ENCODE measurements at regions of chr12 and their contacts with region 1.

Region 1: GRCh38 chr12:14769969-14770495 is 33.2 kb downstream of the WBP11 start:
- DNase-seq: peak; percentile 94
- H3K4me3 Mint-ChIP-seq: peak overlapping the region; percentile 98
- H3K27ac Mint-ChIP-seq: peak overlapping the region; percentile 100
- H3K4me1 Mint-ChIP-seq: peaks cover 39% of the 10 kb centered on the region
- H3K27me3 Mint-ChIP-seq: no peaks in the 10 kb centered on the region

Region 2: GRCh38 chr12:14216405-14217294 is 553.4 kb before region 1 on chr12:
- CTCF ChIA-PET with region 1: no interaction called
- POLR2A ChIA-PET with region 1: interaction called, 3 read pairs
- intact Hi-C with region 1: loop called (anchors 2 kb)
- DNase-seq: no peak
- H3K4me3 Mint-ChIP-seq: peak overlapping the region; percentile 44
- H3K27ac Mint-ChIP-seq: peak overlapping the region; percentile 42
- H3K4me1 Mint-ChIP-seq: peaks cover 35% of the 10 kb centered on the region
- H3K27me3 Mint-ChIP-seq: no peaks in the 10 kb centered on the region

Region 3: GRCh38 chr12:14365294-14366208 is 404.5 kb before region 1 on chr12 and contains the start of gene ATF7IP:
- CTCF ChIA-PET with region 1: no interaction called
- POLR2A ChIA-PET with region 1: interaction called, 12 read pairs
- intact Hi-C with region 1: loop called (anchors 1 kb)
- DNase-seq: peak; percentile 97
- H3K4me3 Mint-ChIP-seq: peak within 1 kb of the TSS; percentile 76
- H3K27ac Mint-ChIP-seq: peak within 1 kb of the TSS; percentile 91
- H3K4me1 Mint-ChIP-seq: peaks cover 41% of the 10 kb centered on the region
- H3K27me3 Mint-ChIP-seq: peaks cover 1% of the 10 kb centered on the region
- total RNA-seq, gene ATF7IP: 93.0 to 94.1 TPM

Region 4: DNA sequence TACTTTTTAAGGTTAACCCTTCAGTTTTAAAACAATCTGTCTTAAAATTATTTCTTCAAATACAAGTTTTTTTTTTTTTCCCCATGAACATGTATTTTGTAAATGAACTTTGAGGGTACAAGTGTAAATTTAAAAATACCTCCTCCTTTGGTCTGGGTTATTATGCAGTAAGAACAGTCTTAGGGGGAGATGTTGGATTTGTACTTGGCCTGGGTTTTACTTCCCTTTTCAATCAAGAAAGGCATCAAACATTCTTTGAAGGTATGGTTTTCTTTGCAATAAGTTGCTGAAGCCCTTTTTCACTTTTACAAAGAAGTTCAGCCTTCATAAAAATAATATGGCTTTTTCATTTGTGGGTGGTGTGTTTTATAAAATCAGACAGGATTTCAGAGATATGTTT is 12.7 kb after region 1 on chr12:
- CTCF ChIA-PET with region 1: interaction called, 4 read pairs
- POLR2A ChIA-PET with region 1: interaction called, 14 read pairs
- intact Hi-C with region 1: no loop called
- DNase-seq: no peak
- H3K4me3 Mint-ChIP-seq: no peak overlapping the region
- H3K27ac Mint-ChIP-seq: no peak overlapping the region
- H3K4me1 Mint-ChIP-seq: no peaks in the 10 kb centered on the region
- H3K27me3 Mint-ChIP-seq: no peaks in the 10 kb centered on the region

Region 5: GRCh38 chr12:14910090-14910915 is 140.3 kb after region 1 on chr12:
- CTCF ChIA-PET with region 1: no interaction called
- POLR2A ChIA-PET with region 1: no interaction called
- intact Hi-C with region 1: loop called (anchors 1 kb)
- DNase-seq: peak; percentile 67
- H3K4me3 Mint-ChIP-seq: peak overlapping the region; percentile 28
- H3K27ac Mint-ChIP-seq: peak overlapping the region; percentile 90
- H3K4me1 Mint-ChIP-seq: peaks cover 37% of the 10 kb centered on the region
- H3K27me3 Mint-ChIP-seq: no peaks in the 10 kb centered on the region

Region 6: GRCh38 chr12:14960548-14961465 is 190.8 kb after region 1 on chr12:
- CTCF ChIA-PET with region 1: interaction called, 14 read pairs
- POLR2A ChIA-PET with region 1: interaction called, 19 read pairs
- intact Hi-C with region 1: loop called (anchors 1 kb)
- DNase-seq: peak; percentile 49
- H3K4me3 Mint-ChIP-seq: peak overlapping the region; percentile 88
- H3K27ac Mint-ChIP-seq: peak overlapping the region; percentile 96
- H3K4me1 Mint-ChIP-seq: peaks cover 43% of the 10 kb centered on the region
- H3K27me3 Mint-ChIP-seq: no peaks in the 10 kb centered on the region

Region 7: DNA sequence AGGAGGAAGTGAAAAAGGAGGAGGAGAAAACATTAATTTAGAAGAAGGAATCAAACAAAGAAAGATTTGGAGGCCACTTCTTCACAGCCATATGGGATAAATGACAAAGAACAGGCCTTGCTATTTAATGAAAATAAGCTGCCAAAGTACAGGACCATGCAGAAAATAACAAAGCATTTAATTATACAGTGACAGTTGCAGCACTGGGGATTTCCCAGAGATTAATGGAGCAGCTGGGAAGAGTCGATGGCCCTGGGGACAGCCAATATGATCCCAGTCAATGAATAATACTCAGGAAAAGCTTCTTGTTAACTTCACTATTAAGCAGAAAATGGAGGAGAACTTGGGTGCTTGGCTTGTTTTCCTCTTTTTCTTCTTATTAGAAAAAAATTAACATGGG is 416.6 kb after region 1 on chr12:
- CTCF ChIA-PET with region 1: no interaction called
- POLR2A ChIA-PET with region 1: no interaction called
- intact Hi-C with region 1: no loop called
- DNase-seq: no peak
- H3K4me3 Mint-ChIP-seq: no peak overlapping the region
- H3K27ac Mint-ChIP-seq: no peak overlapping the region
- H3K4me1 Mint-ChIP-seq: no peaks in the 10 kb centered on the region
- H3K27me3 Mint-ChIP-seq: no peaks in the 10 kb centered on the region

Region 8: GRCh38 chr12:15882118-15882971 is 1112.3 kb after region 1 on chr12 and contains the start of gene STRAP:
- CTCF ChIA-PET with region 1: no interaction called
- POLR2A ChIA-PET with region 1: no interaction called
- intact Hi-C with region 1: loop called (anchors 2 kb)
- DNase-seq: peak; percentile 98
- H3K4me3 Mint-ChIP-seq: peak within 1 kb of the TSS; percentile 96
- H3K27ac Mint-ChIP-seq: peak within 1 kb of the TSS; percentile 94
- H3K4me1 Mint-ChIP-seq: peaks cover 48% of the 10 kb centered on the region
- H3K27me3 Mint-ChIP-seq: no peaks in the 10 kb centered on the region
- total RNA-seq, gene STRAP: 135 to 140 TPM

Measured in activated CD4-positive, alpha-beta memory T cell treated with anti-CD3 and anti-CD28 coated beads for 36 hours (primary cell).